ENCODE measurements at regions of chrX and their contacts with region 1.

Region 1: DNA sequence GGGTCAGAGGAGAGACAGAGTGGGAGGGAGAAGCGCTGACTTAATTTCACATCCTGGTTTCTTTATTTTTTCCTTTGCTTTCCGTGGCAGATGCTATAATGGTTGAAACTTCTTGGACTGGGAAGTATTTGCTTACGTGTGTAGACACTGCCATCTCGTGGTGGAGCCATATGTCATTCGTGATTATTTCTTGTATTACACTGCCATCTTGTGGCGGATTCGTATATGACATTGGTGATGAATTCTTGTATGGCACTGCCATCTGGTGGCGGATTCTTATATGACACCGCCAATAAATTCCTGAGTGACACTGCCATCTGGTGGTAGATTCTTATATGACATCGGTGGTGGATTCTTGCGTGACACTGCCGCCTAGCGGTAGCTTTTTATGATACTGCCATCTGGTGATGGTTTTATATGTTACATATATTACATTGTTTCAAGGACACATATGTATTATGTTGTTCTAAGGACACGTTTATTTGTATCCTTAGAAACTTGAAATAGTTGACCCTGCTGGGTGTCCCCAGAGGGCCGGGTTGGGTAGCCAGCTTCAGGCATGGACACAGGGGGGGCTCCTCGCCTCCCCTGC is 37.3 kb upstream of the CLCN4 start:
- DNase-seq: peak; percentile 73
- ATAC-seq: peak; percentile 60
- H3K4me3 ChIP-seq: no peak overlapping the region
- H3K27ac ChIP-seq: no peak overlapping the region
- H3K4me1 ChIP-seq: peaks cover 31% of the 10 kb centered on the region
- H3K27me3 ChIP-seq: no peaks in the 10 kb centered on the region
- CTCF ChIP-seq: peak; percentile 98 to 100 (median 100)
- EP300 ChIP-seq: no peak
- POLR2A ChIP-seq: no peak
- RAD21 ChIP-seq: peak; percentile 89

Region 2: DNA sequence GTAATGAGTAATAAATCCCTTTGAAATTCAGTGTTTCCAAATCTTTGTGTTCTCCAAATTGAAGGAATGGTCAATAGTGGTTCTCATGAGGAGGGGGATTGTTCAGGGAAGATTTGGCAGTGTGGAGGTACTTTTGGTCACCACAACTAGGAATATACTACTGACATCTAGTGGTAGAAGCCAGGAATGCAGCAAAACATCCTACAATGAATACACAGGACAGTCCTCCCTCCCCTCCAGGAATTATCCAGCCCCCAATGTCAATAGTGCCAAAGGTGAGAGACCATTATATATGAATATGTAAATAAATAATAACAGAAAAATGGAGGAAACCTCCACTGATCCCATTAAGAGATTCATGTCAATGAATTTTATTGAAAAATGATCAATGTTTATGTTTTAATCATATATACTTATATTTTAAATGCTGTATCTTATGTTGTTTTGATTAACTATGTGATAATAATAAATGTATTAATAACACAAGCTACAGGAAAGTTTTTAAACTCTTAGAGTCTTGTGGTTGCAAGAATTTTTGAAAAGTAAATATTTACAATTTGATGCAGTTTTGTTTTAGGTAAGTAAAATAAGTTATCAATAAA is 1303.9 kb before region 1 on chrX:
- CTCF ChIA-PET with region 1: no interaction called
- POLR2A ChIA-PET with region 1: no interaction called
- RAD21 ChIA-PET with region 1: no interaction called
- SMC1A ChIA-PET with region 1: no interaction called
- in situ Hi-C with region 1: loop called (anchors 25 kb)
- intact Hi-C with region 1: loop called (anchors 5 kb)
- DNase-seq: peak; percentile 4
- ATAC-seq: peak; percentile 79
- H3K4me3 ChIP-seq: no peak overlapping the region
- H3K27ac ChIP-seq: no peak overlapping the region
- H3K4me1 ChIP-seq: no peaks in the 10 kb centered on the region
- H3K27me3 ChIP-seq: no peaks in the 10 kb centered on the region
- CTCF ChIP-seq: peak; percentile 69 to 84 (median 78)
- EP300 ChIP-seq: no peak
- POLR2A ChIP-seq: no peak
- RAD21 ChIP-seq: peak; percentile 56

Region 3: GRCh38 chrX:9980927-9981326 is 138.6 kb before region 1 on chrX:
- CTCF ChIA-PET with region 1: interaction called, 44 read pairs
- POLR2A ChIA-PET with region 1: no interaction called
- RAD21 ChIA-PET with region 1: interaction called, 12 read pairs
- SMC1A ChIA-PET with region 1: interaction called, 9 read pairs
- in situ Hi-C with region 1: no loop called
- intact Hi-C with region 1: no loop called
- DNase-seq: no peak
- ATAC-seq: no peak
- H3K4me3 ChIP-seq: no peak overlapping the region
- H3K27ac ChIP-seq: no peak overlapping the region
- H3K4me1 ChIP-seq: no peaks in the 10 kb centered on the region
- H3K27me3 ChIP-seq: no peaks in the 10 kb centered on the region
- CTCF ChIP-seq: no peak
- EP300 ChIP-seq: no peak
- POLR2A ChIP-seq: no peak
- RAD21 ChIP-seq: no peak

Region 4: DNA sequence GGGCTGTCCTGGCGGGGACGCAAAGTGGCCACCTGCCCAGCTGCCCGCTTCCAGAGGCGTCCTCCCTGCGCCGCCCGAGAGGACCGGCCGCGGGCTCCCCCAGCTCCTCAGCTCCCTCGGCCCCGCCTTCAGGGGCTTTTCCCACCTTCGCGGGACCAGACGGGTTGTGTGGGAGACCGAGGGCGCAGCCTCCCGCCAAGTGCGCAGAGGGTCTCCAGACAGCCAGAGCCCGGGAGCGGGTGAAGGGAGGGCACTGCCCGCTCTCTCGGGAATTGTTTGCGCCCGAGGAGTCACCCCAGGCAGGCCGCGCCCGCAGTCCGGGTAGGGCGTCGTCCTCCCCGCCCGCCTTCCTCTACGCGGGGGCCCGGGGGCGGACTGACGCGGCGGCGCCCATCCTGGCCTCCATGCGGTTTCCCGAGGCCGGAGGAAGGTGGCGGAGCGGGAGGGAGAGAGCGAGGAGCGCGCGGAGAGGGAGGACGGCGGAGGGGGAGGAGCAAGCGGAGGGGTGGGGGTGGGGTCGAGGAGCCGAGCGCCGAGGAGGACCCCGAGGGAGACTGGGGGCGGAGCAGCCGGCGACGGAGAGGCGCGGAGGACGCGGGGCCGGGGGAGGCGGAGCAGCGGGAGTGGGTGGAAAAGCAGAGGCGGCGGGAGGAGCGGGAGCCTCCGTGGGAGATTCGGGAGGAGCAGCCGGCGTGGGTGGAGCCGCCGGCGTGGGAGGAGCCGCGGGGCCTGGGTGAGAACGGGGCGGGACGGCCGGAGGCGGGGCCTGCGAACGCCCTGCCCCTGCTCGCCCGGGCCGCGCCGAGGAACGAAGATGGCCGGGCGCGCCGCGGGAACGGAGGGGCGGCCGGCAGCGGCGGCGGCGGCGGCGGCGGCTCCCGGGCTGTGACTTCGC is 104.8 kb before region 1 on chrX:
- CTCF ChIA-PET with region 1: interaction called, 57 read pairs
- POLR2A ChIA-PET with region 1: interaction called, 3 read pairs
- RAD21 ChIA-PET with region 1: interaction called, 31 read pairs
- SMC1A ChIA-PET with region 1: interaction called, 50 read pairs
- in situ Hi-C with region 1: no loop called
- intact Hi-C with region 1: no loop called
- DNase-seq: no peak
- ATAC-seq: peak; percentile 66
- H3K4me3 ChIP-seq: peak overlapping the region; percentile 58; the same call in 1 of the 2 replicates
- H3K27ac ChIP-seq: peak overlapping the region; percentile 33; the same call in 1 of the 2 replicates
- H3K4me1 ChIP-seq: peaks cover 9% of the 10 kb centered on the region
- H3K27me3 ChIP-seq: no peaks in the 10 kb centered on the region
- CTCF ChIP-seq: no peak
- EP300 ChIP-seq: no peak
- POLR2A ChIP-seq: peak; percentile 48; the same call in 1 of the 2 replicates
- RAD21 ChIP-seq: no peak

Region 5: GRCh38 chrX:10071451-10072144 is 47.9 kb before region 1 on chrX:
- CTCF ChIA-PET with region 1: interaction called, 20 read pairs
- POLR2A ChIA-PET with region 1: no interaction called
- RAD21 ChIA-PET with region 1: interaction called, 5 read pairs
- SMC1A ChIA-PET with region 1: interaction called, 30 read pairs
- in situ Hi-C with region 1: no loop called
- intact Hi-C with region 1: loop called (anchors 10 kb)
- DNase-seq: no peak
- ATAC-seq: no peak
- H3K4me3 ChIP-seq: no peak overlapping the region
- H3K27ac ChIP-seq: no peak overlapping the region
- H3K4me1 ChIP-seq: no peaks in the 10 kb centered on the region
- H3K27me3 ChIP-seq: no peaks in the 10 kb centered on the region
- CTCF ChIP-seq: no peak
- EP300 ChIP-seq: no peak
- POLR2A ChIP-seq: no peak
- RAD21 ChIP-seq: no peak

Region 6: DNA sequence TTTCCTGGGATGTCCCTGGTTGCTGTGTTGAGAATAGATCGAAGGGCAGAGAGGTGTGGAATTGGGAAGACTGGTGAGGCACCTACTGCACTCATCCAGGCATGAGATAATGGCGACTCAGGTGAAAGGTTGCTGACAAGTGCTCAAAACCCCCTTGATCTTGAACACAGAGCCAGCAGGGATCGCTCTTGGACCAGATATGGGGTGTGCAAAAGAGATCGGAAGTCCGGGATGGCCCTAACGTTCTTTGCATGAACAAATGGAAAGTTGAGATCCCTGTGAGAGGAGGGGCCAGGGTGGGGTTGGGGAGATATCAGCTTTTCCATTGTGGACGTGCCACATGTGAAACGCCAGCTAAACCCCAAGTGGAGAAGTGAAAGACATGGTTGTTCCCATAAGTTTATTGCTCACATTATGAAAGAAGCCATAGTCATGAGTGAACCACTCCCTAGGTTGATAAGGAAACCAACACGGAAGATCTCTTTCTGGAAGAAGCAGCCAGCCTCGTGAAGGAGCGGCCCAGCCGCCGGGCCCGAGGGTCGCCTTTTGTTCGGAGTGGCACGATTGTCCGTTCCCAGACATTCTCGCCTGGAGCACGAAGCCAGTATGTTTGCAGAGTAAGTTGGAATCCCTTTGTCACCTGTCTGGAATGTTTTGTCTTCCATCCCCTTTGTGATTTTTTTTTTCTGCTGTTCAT is 14.6 kb after region 1 on chrX:
- CTCF ChIA-PET with region 1: interaction called, 7 read pairs
- POLR2A ChIA-PET with region 1: no interaction called
- RAD21 ChIA-PET with region 1: interaction called, 10 read pairs
- SMC1A ChIA-PET with region 1: interaction called, 3 read pairs
- in situ Hi-C with region 1: no loop called
- intact Hi-C with region 1: no loop called
- DNase-seq: no peak
- ATAC-seq: no peak
- H3K4me3 ChIP-seq: no peak overlapping the region
- H3K27ac ChIP-seq: no peak overlapping the region
- H3K4me1 ChIP-seq: no peaks in the 10 kb centered on the region
- H3K27me3 ChIP-seq: no peaks in the 10 kb centered on the region
- CTCF ChIP-seq: no peak
- EP300 ChIP-seq: no peak
- POLR2A ChIP-seq: no peak
- RAD21 ChIP-seq: no peak

Region 7: GRCh38 chrX:10280071-10280470 is 160.6 kb after region 1 on chrX:
- CTCF ChIA-PET with region 1: no interaction called
- POLR2A ChIA-PET with region 1: no interaction called
- RAD21 ChIA-PET with region 1: no interaction called
- SMC1A ChIA-PET with region 1: no interaction called
- in situ Hi-C with region 1: no loop called
- intact Hi-C with region 1: no loop called
- DNase-seq: no peak
- ATAC-seq: no peak
- H3K4me3 ChIP-seq: no peak overlapping the region
- H3K27ac ChIP-seq: no peak overlapping the region
- H3K4me1 ChIP-seq: no peaks in the 10 kb centered on the region
- H3K27me3 ChIP-seq: no peaks in the 10 kb centered on the region; a peak in 1 of 4 replicates
- CTCF ChIP-seq: no peak
- EP300 ChIP-seq: no peak
- POLR2A ChIP-seq: no peak
- RAD21 ChIP-seq: no peak

Region 8: DNA sequence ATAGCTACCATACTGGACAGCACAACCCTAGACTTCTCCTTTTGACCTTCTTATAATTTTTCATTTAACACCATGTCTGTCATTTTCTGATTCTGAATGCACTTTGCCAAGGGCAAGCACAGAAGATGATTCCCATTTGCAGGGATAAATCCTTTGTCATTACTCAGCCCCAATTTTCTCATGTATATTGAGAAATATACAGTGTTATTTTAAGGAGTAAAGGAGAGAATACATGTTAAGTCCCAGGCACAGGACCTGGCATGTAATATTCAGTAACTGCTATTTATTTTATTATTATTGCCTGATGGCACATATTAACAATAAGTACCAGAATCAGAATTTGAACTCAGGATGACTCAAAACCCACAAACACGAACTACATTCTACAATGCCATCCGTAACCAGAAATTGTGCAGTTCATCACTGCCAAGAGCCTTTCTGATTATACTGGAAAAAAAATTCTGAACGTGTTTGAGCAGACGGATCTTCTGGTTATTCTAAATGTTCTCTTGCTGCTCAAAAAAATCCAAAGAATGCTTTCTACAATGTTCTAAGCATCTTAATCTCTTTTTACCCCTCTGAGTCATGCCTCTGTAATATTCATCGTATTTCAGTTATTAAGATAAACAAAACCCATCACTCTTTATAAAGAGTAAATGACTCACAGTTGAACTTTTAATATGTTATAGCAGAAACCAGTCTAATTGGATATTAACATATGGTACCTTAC is 330.9 kb after region 1 on chrX:
- CTCF ChIA-PET with region 1: no interaction called
- POLR2A ChIA-PET with region 1: no interaction called
- RAD21 ChIA-PET with region 1: no interaction called
- SMC1A ChIA-PET with region 1: no interaction called
- in situ Hi-C with region 1: no loop called
- intact Hi-C with region 1: no loop called
- DNase-seq: no peak
- ATAC-seq: no peak
- H3K4me3 ChIP-seq: no peak overlapping the region
- H3K27ac ChIP-seq: no peak overlapping the region
- H3K4me1 ChIP-seq: no peaks in the 10 kb centered on the region
- H3K27me3 ChIP-seq: no peaks in the 10 kb centered on the region; a peak in 1 of 4 replicates
- CTCF ChIP-seq: no peak
- EP300 ChIP-seq: no peak
- POLR2A ChIP-seq: no peak
- RAD21 ChIP-seq: no peak